HepG2 (cell line): ENCODE measurements at regions of chr7 and their contacts with region 1.

Region 1: DNA sequence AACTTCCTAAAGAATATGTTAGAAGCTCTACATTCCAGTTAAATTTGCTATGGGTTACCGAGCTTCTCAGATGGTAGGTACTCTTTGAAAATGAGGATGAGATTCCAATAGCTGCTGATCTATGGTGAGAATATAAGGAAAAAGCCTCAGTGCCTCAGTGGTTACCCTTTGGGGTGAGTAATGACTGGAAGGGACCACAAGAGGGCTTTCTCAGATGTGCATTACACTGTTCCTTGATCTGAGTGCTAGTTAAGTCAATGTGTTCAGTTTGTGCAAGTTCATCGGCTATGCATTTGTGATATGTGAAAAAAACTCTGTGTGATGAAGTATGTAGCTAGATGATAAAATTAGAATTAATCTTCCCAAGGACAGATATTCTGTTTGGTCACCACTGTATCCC is 3.5 kb downstream of the NRCAM start:
- DNase-seq: peak; percentile 13
- ATAC-seq: peak; percentile 50; the same call in 2 of the 3 replicates
- H3K4me3 ChIP-seq: no peak overlapping the region
- H3K27ac ChIP-seq: no peak overlapping the region
- H3K4me1 ChIP-seq: peaks cover 11% of the 10 kb centered on the region
- H3K27me3 ChIP-seq: peaks cover 6 to 35% of the 10 kb centered on the region in 2 experiments; a peak in 4 of 5 replicates
- CTCF ChIP-seq: peak; percentile 37
- EP300 ChIP-seq: no peak
- POLR2A ChIP-seq: no peak
- RAD21 ChIP-seq: no peak

Region 2: DNA sequence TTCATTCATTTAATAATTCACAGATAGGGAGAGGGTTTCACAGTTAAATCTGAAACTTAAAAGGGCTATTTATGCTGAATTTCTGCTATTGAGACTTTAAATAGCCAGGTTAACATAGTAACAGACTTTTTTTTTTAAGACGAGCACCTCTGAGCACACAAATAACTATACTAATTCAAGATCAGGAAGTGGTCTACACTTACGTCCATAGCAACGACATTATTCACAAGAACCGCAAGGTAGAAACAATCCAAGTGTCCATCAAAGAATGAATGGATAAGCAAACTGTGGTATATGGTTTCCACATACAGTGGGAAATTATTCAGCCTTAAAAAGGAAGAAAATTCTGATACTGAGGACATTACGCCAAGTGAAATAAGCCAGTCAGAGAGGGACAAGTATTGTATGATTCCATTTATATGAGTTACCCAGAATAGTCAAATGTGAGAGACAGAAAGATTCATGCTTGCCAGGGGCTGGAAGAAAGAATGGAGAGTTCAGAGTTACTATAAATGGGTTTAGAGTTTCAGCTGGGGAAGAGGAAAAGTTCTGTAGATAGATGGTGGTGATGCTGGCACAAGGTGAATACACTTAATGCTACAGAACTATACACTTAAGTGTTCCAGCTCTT is 182.2 kb before region 1 on chr7:
- CTCF ChIA-PET with region 1: no interaction called
- POLR2A ChIA-PET with region 1: no interaction called
- in situ Hi-C with region 1: no loop called
- intact Hi-C with region 1: no loop called
- DNase-seq: no peak
- ATAC-seq: no peak
- H3K4me3 ChIP-seq: no peak overlapping the region
- H3K27ac ChIP-seq: no peak overlapping the region
- H3K4me1 ChIP-seq: no peaks in the 10 kb centered on the region
- H3K27me3 ChIP-seq: no peaks in the 10 kb centered on the region
- CTCF ChIP-seq: no peak
- EP300 ChIP-seq: no peak
- POLR2A ChIP-seq: no peak
- RAD21 ChIP-seq: no peak

Region 3: DNA sequence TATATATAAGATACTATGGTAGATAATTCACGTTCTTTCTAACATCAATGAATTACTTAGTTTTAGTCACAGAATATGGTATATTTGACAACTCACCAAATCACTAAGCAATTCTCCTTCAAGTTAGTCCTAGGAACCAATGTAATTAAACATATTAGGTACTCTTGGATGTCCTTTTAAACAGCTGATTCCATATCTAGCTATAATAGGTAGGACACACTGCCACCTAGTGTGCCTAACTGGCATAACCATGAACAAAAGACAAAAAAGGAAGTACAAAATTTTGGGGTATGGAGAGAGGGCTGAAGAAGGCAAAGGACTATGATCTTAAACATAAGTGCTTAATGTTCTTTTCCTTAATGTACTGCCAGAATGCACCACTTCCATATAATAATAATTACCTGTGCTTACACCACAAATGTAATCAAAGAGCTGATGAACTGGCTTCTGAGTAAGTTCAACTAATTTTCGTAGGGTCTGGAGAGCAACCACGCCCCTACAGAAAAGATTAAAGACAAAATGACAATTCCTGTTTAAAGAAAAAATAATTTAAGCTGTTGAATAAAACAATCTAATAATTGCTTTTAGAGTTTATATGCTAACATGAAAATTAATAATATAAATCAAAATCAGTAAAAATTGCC is 44.5 kb after region 1 on chr7:
- CTCF ChIA-PET with region 1: interaction called, 3 read pairs
- POLR2A ChIA-PET with region 1: no interaction called
- in situ Hi-C with region 1: no loop called
- intact Hi-C with region 1: loop called (anchors 2 kb)
- DNase-seq: peak; percentile 52
- ATAC-seq: no peak; the same call in 2 of the 3 replicates
- H3K4me3 ChIP-seq: no peak overlapping the region
- H3K27ac ChIP-seq: no peak overlapping the region
- H3K4me1 ChIP-seq: no peaks in the 10 kb centered on the region
- H3K27me3 ChIP-seq: no peaks in the 10 kb centered on the region
- CTCF ChIP-seq: peak; percentile 84
- EP300 ChIP-seq: no peak
- POLR2A ChIP-seq: no peak
- RAD21 ChIP-seq: peak; percentile 48; the same call in 1 of the 2 replicates